Spleen (tissue), 13 donors: ENCODE measurements at regions of chr4 and their contacts with region 1.

Region 1: GRCh38 chr4:185039508-185040273 is 21.4 kb downstream of the HELT start:
- DNase-seq: no peak
- H3K4me3 ChIP-seq: peak overlapping the region in 1 of 8 donors; percentile 31
- H3K27ac ChIP-seq: no peak overlapping the region
- H3K4me1 ChIP-seq: peaks cover 0 to 11% (median 7%) of the 10 kb centered on the region in 6 donors
- H3K27me3 ChIP-seq: peaks cover 0 to 3% (median 0%) of the 10 kb centered on the region in 7 donors
- CTCF ChIP-seq: peak; percentile 50 to 89 (median 76)
- POLR2A ChIP-seq: no peak

Region 2: DNA sequence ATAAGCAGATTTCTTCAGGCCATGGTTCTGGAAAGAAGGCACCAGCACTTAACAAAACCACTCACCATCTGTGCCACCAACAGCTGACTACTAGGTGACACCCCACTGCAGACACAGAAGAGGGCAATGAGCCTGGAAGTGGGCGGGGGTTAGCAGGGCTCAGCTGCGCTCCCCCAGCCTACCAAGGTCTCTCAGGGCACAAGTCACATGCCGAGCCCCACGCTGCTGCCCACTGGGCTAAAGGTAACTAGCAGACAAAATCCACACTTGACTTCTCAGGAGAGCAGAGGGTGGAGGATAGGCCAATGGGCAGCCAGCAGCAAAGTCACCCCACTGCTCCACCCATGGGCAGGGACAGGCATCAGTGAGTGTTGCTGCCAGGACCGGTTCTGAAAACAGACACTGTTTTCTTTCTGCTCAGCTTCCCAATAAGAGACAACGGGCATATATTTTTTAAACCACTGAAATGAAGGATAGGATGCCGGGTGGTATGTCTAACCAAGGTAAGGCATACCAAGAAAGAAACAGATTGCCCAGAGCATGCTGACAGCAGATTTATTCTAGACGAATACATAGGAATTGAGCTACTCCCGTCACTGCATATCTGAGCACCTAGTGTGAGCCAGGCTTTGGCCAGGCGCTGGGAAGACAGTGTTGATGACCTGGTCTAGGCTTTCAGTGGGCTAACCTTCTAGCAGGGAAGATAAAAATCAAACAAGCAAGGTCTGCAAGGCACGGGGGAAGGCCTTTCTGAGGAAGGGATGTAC is 234.0 kb before region 1 on chr4:
- intact Hi-C with region 1: no loop called
- DNase-seq: peak; percentile 86
- H3K4me3 ChIP-seq: no peak overlapping the region
- H3K27ac ChIP-seq: peak overlapping the region in 3 of 8 donors; percentile 29 to 45 (median 41)
- H3K4me1 ChIP-seq: peaks cover 8 to 71% (median 35%) of the 10 kb centered on the region in 6 donors
- H3K27me3 ChIP-seq: no peaks in the 10 kb centered on the region
- CTCF ChIP-seq: no peak
- POLR2A ChIP-seq: no peak

Region 3: DNA sequence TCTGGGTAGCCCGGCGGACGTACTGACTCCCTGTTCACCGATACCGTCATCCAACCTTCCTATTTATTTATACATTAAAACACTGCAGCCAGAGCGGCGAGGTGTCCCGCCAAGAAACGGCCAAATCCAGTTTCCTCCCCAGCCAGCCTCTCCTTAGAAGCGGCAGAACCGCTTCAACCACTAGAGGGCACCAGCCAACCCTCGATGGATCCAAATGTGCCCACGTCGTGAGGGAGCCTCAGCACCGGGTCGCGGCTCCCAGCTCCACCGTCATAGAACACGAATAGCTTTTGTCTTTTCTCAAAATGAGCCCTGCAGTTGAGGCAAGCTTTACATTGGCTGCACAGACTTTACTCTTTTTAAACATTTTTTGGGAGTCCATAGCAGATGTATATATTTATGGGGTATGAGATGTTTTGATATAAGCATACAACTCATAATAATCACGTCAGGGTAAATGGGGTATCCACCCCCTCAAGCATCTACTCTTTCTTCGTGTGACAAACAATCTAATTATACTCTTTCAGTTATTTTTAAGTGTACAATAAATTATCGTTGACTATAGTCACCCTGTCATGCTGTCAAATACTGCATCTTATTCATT is 34.4 kb before region 1 on chr4:
- intact Hi-C with region 1: no loop called
- DNase-seq: peak; percentile 92
- H3K4me3 ChIP-seq: peak overlapping the region in 4 of 8 donors; percentile 1 to 52 (median 16)
- H3K27ac ChIP-seq: no peak overlapping the region
- H3K4me1 ChIP-seq: peaks cover 0 to 14% (median 11%) of the 10 kb centered on the region in 6 donors
- H3K27me3 ChIP-seq: peaks cover 0 to 72% (median 10%) of the 10 kb centered on the region in 7 donors
- CTCF ChIP-seq: peak; percentile 63 to 96 (median 87)
- POLR2A ChIP-seq: no peak

Region 4: GRCh38 chr4:185096032-185096653 is 56.5 kb after region 1 on chr4:
- intact Hi-C with region 1: loop called (anchors 2 kb)
- DNase-seq: no peak
- H3K4me3 ChIP-seq: no peak overlapping the region
- H3K27ac ChIP-seq: no peak overlapping the region
- H3K4me1 ChIP-seq: no peaks in the 10 kb centered on the region
- H3K27me3 ChIP-seq: peaks cover 0 to 13% (median 0%) of the 10 kb centered on the region in 7 donors
- CTCF ChIP-seq: peak in 9 of 11 experiments; percentile 10 to 70 (median 60)
- POLR2A ChIP-seq: no peak

Region 5: GRCh38 chr4:185134307-185134869 is 94.7 kb after region 1 on chr4:
- intact Hi-C with region 1: loop called (anchors 5 kb)
- DNase-seq: no peak
- H3K4me3 ChIP-seq: no peak overlapping the region
- H3K27ac ChIP-seq: no peak overlapping the region
- H3K4me1 ChIP-seq: peaks cover 0 to 8% (median 0%) of the 10 kb centered on the region in 6 donors
- H3K27me3 ChIP-seq: peaks cover 0 to 21% (median 0%) of the 10 kb centered on the region in 7 donors
- CTCF ChIP-seq: peak; percentile 36 to 84 (median 65)
- POLR2A ChIP-seq: no peak

Region 6: DNA sequence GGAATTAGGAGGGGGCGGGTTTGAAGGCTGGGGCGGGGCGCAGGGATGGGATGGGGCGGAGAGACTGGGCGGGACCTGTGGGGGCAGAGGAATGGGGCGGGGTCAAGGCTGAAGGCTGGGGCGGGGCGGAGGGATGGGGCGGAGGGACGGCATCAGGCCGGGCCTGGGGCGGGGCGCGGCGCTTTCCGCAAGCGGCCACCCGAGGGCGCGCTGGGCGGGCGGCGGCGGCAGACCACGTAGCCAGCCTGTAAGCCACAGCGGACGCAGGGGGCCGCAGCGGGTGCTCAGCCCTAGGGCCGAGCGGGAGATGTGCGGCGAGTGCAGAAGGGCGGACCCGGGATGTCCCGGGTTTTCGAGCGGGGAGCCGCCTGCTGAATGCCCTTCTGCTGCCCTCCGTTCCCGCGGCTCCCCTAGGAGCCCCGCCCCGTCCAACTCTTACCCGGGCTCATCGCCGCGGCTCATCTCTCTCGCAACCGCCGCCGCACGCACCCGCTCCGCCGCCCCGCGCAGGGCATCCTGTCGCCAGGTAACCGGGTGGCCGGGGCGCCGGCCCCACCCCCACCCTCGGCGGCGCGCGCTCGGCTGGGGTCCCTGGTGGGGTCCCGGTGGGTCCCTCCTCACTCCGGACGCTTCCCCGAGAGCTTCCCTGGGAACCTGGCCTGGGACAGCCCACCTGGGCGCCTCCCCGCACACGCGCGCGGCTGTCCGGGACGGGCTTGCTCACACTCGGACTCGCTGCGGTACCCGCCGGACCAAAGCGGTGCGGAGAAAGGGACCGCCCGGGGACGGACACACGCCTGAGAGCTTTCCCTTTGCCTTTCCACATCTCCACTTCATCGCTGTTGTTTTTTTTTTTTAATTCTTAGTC is 431.8 kb after region 1 on chr4 and contains the start of gene CCDC110:
- intact Hi-C with region 1: no loop called
- DNase-seq: peak; percentile 96
- H3K4me3 ChIP-seq: peak within 1 kb of the TSS; percentile 56 to 87 (median 76)
- H3K27ac ChIP-seq: peak within 1 kb of the TSS in 7 of 8 donors; percentile 59 to 82 (median 75)
- H3K4me1 ChIP-seq: peaks cover 5 to 24% (median 19%) of the 10 kb centered on the region in 6 donors
- H3K27me3 ChIP-seq: peaks cover 0 to 27% (median 0%) of the 10 kb centered on the region in 7 donors
- CTCF ChIP-seq: peak; percentile 19 to 87 (median 80)
- POLR2A ChIP-seq: no peak
- total RNA-seq, gene CCDC110: 0.60 to 4.7 (median 0.87) TPM